ENCODE measurements at regions of chr1 and their contacts with region 1.

Region 1: DNA sequence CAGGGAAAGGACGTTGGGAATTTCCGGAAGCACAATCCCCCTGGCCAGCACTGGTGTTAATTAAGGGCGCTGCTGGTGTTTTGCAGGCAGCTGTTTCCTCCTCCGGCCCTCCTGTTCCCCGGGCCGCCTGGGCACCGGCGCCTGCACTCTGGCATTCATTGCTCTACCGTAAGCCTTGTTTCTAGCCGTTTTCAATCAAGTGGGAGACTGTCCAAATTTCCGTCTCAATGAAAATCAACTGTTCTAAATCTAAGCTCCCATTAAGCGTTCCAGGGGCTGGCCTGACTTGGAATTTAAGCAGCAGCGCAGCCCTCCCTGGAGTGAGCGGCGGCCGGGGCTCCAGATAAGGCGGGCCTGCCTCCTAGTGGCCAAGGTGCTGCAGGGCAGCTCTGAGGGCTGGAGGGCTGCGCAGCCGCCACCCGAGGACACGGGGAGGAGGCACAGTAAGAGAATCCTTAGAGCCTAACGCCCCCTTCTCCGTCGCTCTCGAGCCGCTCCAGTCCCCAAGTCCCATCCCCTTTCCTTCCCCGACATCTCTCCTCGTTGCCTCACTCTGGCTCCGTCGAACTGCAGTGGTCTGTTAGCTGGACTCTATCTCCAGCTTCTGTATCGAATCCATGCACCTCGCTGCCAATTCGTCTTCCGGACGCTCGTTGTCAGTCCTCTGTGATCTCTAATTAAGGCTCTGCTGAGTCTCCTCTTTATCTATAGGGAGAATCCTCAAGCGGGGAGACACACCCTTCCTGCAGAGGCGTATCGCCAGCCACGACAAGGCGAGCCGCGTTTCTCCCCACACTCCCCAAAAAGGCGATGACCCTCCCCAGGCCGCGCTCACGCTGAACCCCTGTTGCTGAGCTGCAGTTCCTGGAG is 57.8 kb upstream of the LRRC8D start:
- DNase-seq: peak; percentile 58 to 90
- H3K4me3 ChIP-seq: peak overlapping the region; percentile 34 to 71 (median 60); a peak in 7 of 8 replicates
- H3K27ac ChIP-seq: no peak overlapping the region
- H3K4me1 ChIP-seq: peaks cover 0 to 4% (median 3%) of the 10 kb centered on the region in 4 experiments; a peak in 3 of 7 replicates
- H3K27me3 ChIP-seq: peaks cover 0 to 17% (median 16%) of the 10 kb centered on the region in 4 experiments; a peak in 6 of 7 replicates
- CTCF ChIP-seq: peak; percentile 92 to 99 (median 98)
- EP300 ChIP-seq: peak in 1 of 2 experiments; percentile 11; a peak in 1 of 3 replicates
- POLR2A ChIP-seq: no peak
- RAD21 ChIP-seq: peak; percentile 94 to 97

Region 2: DNA sequence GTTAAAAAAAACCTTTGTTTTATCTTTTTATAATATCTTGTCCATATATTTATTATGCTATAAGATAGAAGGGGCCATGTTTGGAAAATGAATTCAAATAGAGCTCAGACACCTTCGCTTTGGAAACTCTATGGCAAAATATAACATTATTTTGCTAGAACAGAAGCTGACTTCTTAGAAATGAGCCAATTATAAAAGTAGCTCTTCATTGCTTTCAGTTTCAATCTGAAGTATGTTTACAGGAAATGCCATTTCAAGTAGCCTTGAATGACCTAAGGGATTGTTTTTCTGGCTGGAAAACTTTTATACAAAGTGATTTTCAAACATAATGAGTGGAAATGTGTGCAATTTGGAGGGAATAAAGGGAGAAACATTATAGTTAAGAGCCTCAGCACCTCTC is 452.5 kb before region 1 on chr1:
- CTCF ChIA-PET with region 1: no interaction called
- POLR2A ChIA-PET with region 1: no interaction called
- DNase-seq: no peak
- H3K4me3 ChIP-seq: no peak overlapping the region
- H3K27ac ChIP-seq: no peak overlapping the region
- H3K4me1 ChIP-seq: no peaks in the 10 kb centered on the region
- H3K27me3 ChIP-seq: no peaks in the 10 kb centered on the region
- CTCF ChIP-seq: no peak
- EP300 ChIP-seq: no peak
- POLR2A ChIP-seq: no peak
- RAD21 ChIP-seq: no peak

Region 3: GRCh38 chr1:89519779-89520358 is 243.1 kb before region 1 on chr1:
- CTCF ChIA-PET with region 1: interaction called, 10 read pairs
- POLR2A ChIA-PET with region 1: no interaction called
- DNase-seq: no peak
- H3K4me3 ChIP-seq: no peak overlapping the region
- H3K27ac ChIP-seq: no peak overlapping the region
- H3K4me1 ChIP-seq: peaks cover 0 to 8% (median 0%) of the 10 kb centered on the region in 4 experiments; a peak in 3 of 7 replicates
- H3K27me3 ChIP-seq: no peaks in the 10 kb centered on the region
- CTCF ChIP-seq: peak; percentile 17 to 59 (median 53)
- EP300 ChIP-seq: no peak
- POLR2A ChIP-seq: no peak
- RAD21 ChIP-seq: peak; percentile 71 to 73

Region 4: DNA sequence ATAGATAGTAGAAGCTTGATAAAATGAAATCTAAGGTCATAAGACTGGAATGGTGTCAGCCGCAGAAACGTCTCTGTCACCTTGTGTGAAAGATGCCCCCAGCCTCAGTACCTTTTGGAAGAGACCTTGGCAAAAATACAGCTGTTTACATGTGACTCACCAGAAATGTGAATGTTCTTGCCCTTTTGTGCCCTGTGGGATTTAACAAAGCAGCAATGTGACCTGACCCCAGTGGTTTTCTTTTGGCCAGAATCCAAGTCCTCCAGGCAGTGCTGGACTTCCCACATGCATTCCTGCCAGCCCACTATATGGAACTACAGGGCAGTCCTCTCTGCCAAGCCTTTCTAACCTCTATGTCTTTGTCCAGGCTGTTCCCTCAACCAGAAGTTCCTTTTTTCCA is 157.3 kb before region 1 on chr1:
- CTCF ChIA-PET with region 1: interaction called, 21 read pairs
- POLR2A ChIA-PET with region 1: no interaction called
- DNase-seq: no peak
- H3K4me3 ChIP-seq: no peak overlapping the region
- H3K27ac ChIP-seq: no peak overlapping the region
- H3K4me1 ChIP-seq: no peaks in the 10 kb centered on the region
- H3K27me3 ChIP-seq: no peaks in the 10 kb centered on the region; a peak in 1 of 7 replicates
- CTCF ChIP-seq: no peak
- EP300 ChIP-seq: no peak
- POLR2A ChIP-seq: no peak
- RAD21 ChIP-seq: no peak

Region 5: GRCh38 chr1:89622895-89623294 is 140.1 kb before region 1 on chr1:
- CTCF ChIA-PET with region 1: interaction called, 15 read pairs
- POLR2A ChIA-PET with region 1: no interaction called
- DNase-seq: no peak
- H3K4me3 ChIP-seq: no peak overlapping the region
- H3K27ac ChIP-seq: no peak overlapping the region
- H3K4me1 ChIP-seq: no peaks in the 10 kb centered on the region
- H3K27me3 ChIP-seq: no peaks in the 10 kb centered on the region; a peak in 1 of 7 replicates
- CTCF ChIP-seq: peak in 2 of 3 experiments; percentile 20 to 28; a peak in 2 of 4 replicates
- EP300 ChIP-seq: no peak
- POLR2A ChIP-seq: no peak
- RAD21 ChIP-seq: peak; percentile 43 to 52

Region 6: GRCh38 chr1:89643577-89643976 is 119.4 kb before region 1 on chr1:
- CTCF ChIA-PET with region 1: interaction called, 101 read pairs
- POLR2A ChIA-PET with region 1: no interaction called
- DNase-seq: no peak
- H3K4me3 ChIP-seq: no peak overlapping the region
- H3K27ac ChIP-seq: no peak overlapping the region
- H3K4me1 ChIP-seq: no peaks in the 10 kb centered on the region
- H3K27me3 ChIP-seq: no peaks in the 10 kb centered on the region
- CTCF ChIP-seq: no peak
- EP300 ChIP-seq: no peak
- POLR2A ChIP-seq: no peak
- RAD21 ChIP-seq: no peak

Region 7: DNA sequence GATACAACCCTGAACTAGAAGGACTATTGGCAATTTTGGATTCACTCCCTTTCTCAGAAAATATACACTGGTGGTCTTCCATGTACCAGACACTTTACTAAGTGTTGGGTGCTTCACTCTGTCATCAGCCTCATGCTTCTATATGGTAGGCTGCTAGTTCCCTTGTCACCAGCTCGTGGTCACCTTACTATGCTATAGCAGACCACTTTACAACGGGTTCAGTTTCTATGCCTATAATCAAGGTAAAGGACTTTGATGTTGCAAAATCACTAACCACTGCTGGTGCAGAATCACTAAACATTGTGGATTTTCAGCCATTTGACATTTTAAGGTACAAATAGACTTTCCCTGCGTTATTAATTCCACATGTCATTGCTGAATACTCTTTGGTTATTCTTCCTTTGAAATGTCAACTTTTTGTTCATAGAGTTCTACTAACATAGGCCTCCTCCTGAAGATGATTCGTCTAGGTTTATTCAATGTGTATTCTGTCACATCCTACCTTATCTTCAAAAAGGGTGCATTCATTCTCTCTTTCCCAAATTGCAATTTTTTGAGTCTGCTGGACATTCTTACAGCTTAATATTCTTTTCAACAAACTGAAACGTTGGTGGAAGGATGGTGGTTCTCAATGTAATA is 51.8 kb before region 1 on chr1:
- CTCF ChIA-PET with region 1: interaction called, 11 read pairs
- POLR2A ChIA-PET with region 1: no interaction called
- DNase-seq: no peak
- H3K4me3 ChIP-seq: no peak overlapping the region
- H3K27ac ChIP-seq: no peak overlapping the region
- H3K4me1 ChIP-seq: peaks cover 0 to 6% (median 0%) of the 10 kb centered on the region in 4 experiments; a peak in 2 of 7 replicates
- H3K27me3 ChIP-seq: no peaks in the 10 kb centered on the region
- CTCF ChIP-seq: no peak
- EP300 ChIP-seq: no peak
- POLR2A ChIP-seq: no peak
- RAD21 ChIP-seq: no peak

Region 8: GRCh38 chr1:89804642-89805237 is 41.7 kb after region 1 on chr1:
- CTCF ChIA-PET with region 1: interaction called, 12 read pairs
- POLR2A ChIA-PET with region 1: no interaction called
- DNase-seq: peak in 1 of 2 experiments; percentile 96
- H3K4me3 ChIP-seq: no peak overlapping the region
- H3K27ac ChIP-seq: no peak overlapping the region
- H3K4me1 ChIP-seq: peaks cover 6 to 22% (median 10%) of the 10 kb centered on the region in 4 experiments; a peak in 5 of 7 replicates
- H3K27me3 ChIP-seq: no peaks in the 10 kb centered on the region; a peak in 4 of 7 replicates
- CTCF ChIP-seq: peak; percentile 69 to 93 (median 88)
- EP300 ChIP-seq: no peak
- POLR2A ChIP-seq: no peak
- RAD21 ChIP-seq: peak; percentile 98